K562 (cell line): ENCODE measurements at regions of chr1 and their contacts with region 1.

Region 1: DNA sequence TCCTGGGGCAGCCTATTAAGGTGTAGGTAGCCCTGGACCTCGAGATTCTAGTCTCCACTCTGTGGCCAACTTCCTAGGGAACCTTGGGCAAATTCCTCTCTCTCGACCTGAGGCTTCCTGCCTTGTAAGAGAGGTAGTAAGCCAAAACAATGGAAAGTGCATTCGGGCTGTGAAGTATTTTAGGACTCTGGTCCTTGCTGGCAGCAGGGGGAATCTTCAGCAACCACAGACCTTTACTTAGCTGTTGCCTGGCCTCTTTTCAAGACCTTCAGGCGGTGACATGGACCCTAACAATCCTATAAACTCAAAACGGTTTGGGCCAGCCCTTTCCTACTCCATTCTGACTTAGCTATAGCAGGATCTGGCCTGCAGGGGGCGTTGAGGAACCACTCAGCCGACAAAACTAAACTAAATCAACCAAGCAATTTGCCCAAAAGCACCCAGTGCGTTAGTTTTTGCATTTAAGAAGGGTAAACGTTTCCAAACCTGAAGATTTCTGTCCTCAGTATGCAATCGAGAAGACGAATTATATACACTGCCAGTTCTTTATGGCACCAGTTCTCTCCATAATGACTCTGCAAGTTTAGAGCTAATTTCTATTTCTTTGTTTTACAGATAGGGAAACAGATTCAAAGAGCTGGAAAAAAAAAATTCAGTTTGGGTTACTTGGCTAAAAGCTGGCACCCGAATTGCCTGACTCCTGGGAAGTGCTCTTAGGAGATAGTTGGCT is 10.9 kb upstream of the SESN2 start:
- DNase-seq: peak; percentile 67 to 92 (median 74)
- ATAC-seq: peak; percentile 71
- H3K4me3 ChIP-seq: peak overlapping the region; percentile 0; the same call in 1 of the 2 replicates
- H3K27ac ChIP-seq: peak overlapping the region; percentile 81
- H3K4me1 ChIP-seq: peaks cover 14 to 36% of the 10 kb centered on the region in 2 experiments
- H3K27me3 ChIP-seq: no peaks in the 10 kb centered on the region
- CTCF ChIP-seq: peak; percentile 88 to 99 (median 98)
- EP300 ChIP-seq: peak; percentile 60
- POLR2A ChIP-seq: no peak
- RAD21 ChIP-seq: peak; percentile 92

Region 2: GRCh38 chr1:28172713-28173150 is 75.7 kb before region 1 on chr1:
- CTCF ChIA-PET with region 1: no interaction called
- POLR2A ChIA-PET with region 1: no interaction called
- in situ Hi-C with region 1: no loop called
- intact Hi-C with region 1: no loop called
- DNase-seq: peak in 3 of 4 experiments; percentile 32 to 77 (median 64)
- ATAC-seq: peak; percentile 75
- H3K4me3 ChIP-seq: no peak overlapping the region; the same call in 1 of the 2 replicates
- H3K27ac ChIP-seq: peak overlapping the region; percentile 36; the same call in 2 of the 3 replicates
- H3K4me1 ChIP-seq: peaks cover 24 to 33% of the 10 kb centered on the region in 2 experiments
- H3K27me3 ChIP-seq: no peaks in the 10 kb centered on the region; a peak in 1 of 5 replicates
- CTCF ChIP-seq: no peak
- EP300 ChIP-seq: peak; percentile 92
- POLR2A ChIP-seq: no peak
- RAD21 ChIP-seq: no peak; a peak in 1 of 4 replicates

Region 3: GRCh38 chr1:28259307-28260167 is 11.1 kb after region 1 on chr1 and contains the start of gene SESN2:
- CTCF ChIA-PET with region 1: no interaction called
- POLR2A ChIA-PET with region 1: interaction called, 245 read pairs
- in situ Hi-C with region 1: no loop called
- intact Hi-C with region 1: loop called (anchors 1 kb)
- DNase-seq: peak; percentile 99 to 100 (median 100)
- ATAC-seq: peak; percentile 92
- H3K4me3 ChIP-seq: peak within 1 kb of the TSS; percentile 96
- H3K27ac ChIP-seq: peak within 1 kb of the TSS; percentile 90
- H3K4me1 ChIP-seq: peaks cover 52 to 64% of the 10 kb centered on the region in 2 experiments
- H3K27me3 ChIP-seq: no peaks in the 10 kb centered on the region
- CTCF ChIP-seq: no peak; a peak in 1 of 6 replicates
- EP300 ChIP-seq: no peak
- POLR2A ChIP-seq: peak; percentile 99
- RAD21 ChIP-seq: peak in 1 of 2 experiments; percentile 31; a peak in 1 of 4 replicates
- polyA plus RNA-seq, gene SESN2: 3.7 to 5.4 TPM

Region 4: DNA sequence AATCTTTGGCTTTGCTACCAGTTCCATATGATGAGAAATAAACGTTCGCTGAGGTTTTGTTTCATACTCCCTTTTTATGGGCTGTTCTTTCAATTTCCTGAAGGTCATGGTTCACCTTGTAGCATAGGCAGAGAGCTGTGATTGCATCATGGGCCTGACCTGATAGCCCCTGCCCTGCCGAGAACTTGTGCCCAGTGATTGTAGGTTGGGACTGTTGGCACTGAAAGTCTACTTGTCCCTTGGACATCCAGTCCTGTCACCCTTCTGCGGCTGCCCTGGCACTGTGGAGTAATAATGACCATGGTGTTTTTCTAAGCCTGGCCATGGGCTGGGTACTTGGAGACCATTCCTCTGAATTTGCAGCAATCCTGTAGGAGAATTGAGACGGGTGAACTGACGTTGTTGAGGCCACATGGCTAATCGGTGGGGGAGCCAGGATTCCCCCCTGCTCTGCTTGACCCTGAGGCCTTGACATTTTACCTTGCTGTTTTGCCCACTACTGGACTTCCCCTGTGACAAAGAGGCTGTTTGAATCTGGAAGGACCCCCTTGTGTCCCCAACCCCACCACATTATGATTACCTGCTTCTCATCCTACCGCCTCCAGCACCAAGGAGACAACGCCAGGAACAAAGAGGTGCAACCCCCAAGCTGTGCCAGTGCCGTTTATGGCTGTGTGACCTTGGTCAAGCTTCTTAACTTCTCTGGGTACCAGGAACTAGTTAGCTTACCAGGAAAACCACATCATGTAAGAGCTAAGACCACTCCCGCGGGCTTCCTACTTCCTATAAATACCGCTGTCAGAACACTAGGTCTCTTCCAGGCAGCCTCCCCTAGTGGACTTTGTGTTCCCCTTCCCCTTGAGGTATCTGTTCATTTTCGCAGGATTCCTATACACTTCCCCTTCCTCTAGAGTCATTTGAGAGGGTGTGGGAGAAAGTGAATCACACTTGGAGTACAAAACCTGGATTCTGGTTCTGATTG is 34.3 kb after region 1 on chr1:
- CTCF ChIA-PET with region 1: no interaction called
- POLR2A ChIA-PET with region 1: interaction called, 7 read pairs
- in situ Hi-C with region 1: no loop called
- intact Hi-C with region 1: loop called (anchors 1 kb)
- DNase-seq: peak in 2 of 4 experiments; percentile 9 to 16
- ATAC-seq: peak; percentile 49
- H3K4me3 ChIP-seq: no peak overlapping the region
- H3K27ac ChIP-seq: no peak overlapping the region
- H3K4me1 ChIP-seq: peaks cover 11 to 17% of the 10 kb centered on the region in 2 experiments; a peak in 4 of 5 replicates
- H3K27me3 ChIP-seq: no peaks in the 10 kb centered on the region
- CTCF ChIP-seq: peak in 2 of 3 experiments; percentile 10 to 22; a peak in 2 of 6 replicates
- EP300 ChIP-seq: no peak
- POLR2A ChIP-seq: peak; percentile 27; the same call in 1 of the 2 replicates
- RAD21 ChIP-seq: no peak

Region 5: DNA sequence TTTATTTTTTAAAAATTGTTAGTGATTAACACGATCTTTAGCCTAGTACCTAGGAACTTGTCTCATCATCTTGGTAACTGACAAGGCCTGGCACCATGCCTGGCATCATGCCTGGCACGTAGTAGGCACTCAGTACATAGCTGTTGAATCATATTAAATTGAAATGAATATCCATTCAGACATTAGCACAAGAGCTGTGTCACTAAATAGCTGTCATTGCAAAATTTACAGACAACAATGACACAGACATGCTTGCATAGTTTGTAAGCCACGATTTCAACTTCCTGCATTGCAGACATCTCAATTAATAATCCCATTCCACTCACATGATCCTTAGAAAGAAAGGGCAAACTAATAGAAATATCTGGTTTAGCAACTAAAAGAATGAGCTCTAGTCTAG is 105.7 kb after region 1 on chr1:
- CTCF ChIA-PET with region 1: interaction called, 4 read pairs
- POLR2A ChIA-PET with region 1: no interaction called
- in situ Hi-C with region 1: no loop called
- intact Hi-C with region 1: loop called (anchors 2 kb)
- DNase-seq: no peak
- ATAC-seq: no peak
- H3K4me3 ChIP-seq: no peak overlapping the region
- H3K27ac ChIP-seq: no peak overlapping the region
- H3K4me1 ChIP-seq: peaks cover 21 to 34% of the 10 kb centered on the region in 2 experiments
- H3K27me3 ChIP-seq: no peaks in the 10 kb centered on the region
- CTCF ChIP-seq: no peak
- EP300 ChIP-seq: no peak
- POLR2A ChIP-seq: no peak
- RAD21 ChIP-seq: no peak

Region 6: DNA sequence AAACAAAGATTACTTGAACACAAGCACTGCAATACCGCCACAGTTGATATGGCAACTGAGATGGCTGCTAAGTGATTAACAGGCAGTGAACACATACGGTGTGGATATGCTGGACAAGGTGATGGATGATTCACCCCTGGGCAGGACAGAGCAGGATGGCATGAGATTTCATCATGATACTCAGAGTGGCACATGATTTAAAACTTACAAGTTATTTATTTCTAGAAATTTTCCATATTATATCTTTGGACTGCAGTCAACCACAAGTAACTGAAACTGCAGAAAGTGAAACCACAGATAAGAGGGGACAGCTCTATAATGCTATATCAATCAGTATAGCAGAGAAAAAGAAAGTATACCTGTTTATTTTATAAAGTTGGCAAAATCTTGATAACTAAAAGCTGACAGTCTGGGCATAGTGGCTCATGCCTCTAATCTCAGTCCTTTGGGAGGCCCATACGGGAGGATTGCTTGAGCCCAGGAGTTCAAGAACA is 169.0 kb after region 1 on chr1:
- CTCF ChIA-PET with region 1: no interaction called
- POLR2A ChIA-PET with region 1: no interaction called
- in situ Hi-C with region 1: no loop called
- intact Hi-C with region 1: loop called (anchors 5 kb)
- DNase-seq: peak in 2 of 4 experiments; percentile 39 to 69
- ATAC-seq: peak; percentile 74
- H3K4me3 ChIP-seq: 0 out of 2 replicates have a peak overlapping the region, but pooled peaks have one; percentile 6
- H3K27ac ChIP-seq: peak overlapping the region; percentile 18
- H3K4me1 ChIP-seq: peaks cover 22 to 47% of the 10 kb centered on the region in 2 experiments
- H3K27me3 ChIP-seq: no peaks in the 10 kb centered on the region
- CTCF ChIP-seq: no peak
- EP300 ChIP-seq: peak; percentile 90
- POLR2A ChIP-seq: no peak
- RAD21 ChIP-seq: no peak

Region 7: DNA sequence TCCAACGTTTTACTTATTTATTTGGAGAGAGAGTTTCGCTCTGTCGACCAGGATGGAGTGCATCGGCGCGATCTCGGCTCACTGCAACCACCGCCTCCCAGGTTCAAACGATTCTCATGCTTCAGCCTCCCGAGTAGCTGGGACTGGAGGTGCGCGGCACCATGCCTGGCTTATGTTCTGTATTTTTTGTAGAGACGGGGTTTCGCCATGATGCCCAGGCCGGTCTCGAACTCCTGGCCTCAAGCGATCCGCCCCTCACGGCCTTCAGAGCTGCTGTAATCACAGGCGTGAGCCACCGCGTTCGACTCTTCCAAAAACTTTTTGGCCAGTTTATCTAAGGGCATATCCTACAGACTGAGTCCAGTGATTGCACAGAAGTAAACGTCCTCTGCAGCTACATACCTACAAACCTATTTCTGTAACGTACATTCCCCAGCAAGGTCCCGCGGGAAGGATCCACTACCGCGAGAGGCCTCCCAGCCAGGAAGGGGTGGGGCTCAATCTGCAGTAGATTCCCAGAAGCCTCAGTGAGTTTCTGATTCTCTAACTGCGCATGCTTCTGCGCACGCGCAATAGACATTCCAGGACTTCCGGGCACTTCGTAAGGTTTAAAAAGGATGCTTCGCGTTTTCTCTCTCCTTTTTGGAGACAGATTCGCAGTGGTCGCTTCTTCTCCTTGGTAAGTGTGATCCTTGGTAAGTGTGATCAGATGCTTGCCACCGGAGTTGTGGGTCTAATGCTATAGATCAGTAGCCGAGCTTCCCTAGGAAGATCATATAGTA is 257.1 kb after region 1 on chr1 and contains the start of gene RCC1:
- CTCF ChIA-PET with region 1: no interaction called
- POLR2A ChIA-PET with region 1: interaction called, 27 read pairs
- in situ Hi-C with region 1: no loop called
- intact Hi-C with region 1: no loop called
- DNase-seq: peak; percentile 95 to 99 (median 96)
- ATAC-seq: peak; percentile 81
- H3K4me3 ChIP-seq: peak within 1 kb of the TSS; percentile 87
- H3K27ac ChIP-seq: peak within 1 kb of the TSS; percentile 94
- H3K4me1 ChIP-seq: peaks cover 11 to 29% of the 10 kb centered on the region in 2 experiments; a peak in 4 of 5 replicates
- H3K27me3 ChIP-seq: no peaks in the 10 kb centered on the region
- CTCF ChIP-seq: no peak
- EP300 ChIP-seq: no peak; the same call in 1 of the 2 replicates
- POLR2A ChIP-seq: peak; percentile 100
- RAD21 ChIP-seq: 0 out of 4 replicates have a peak, but pooled peaks of 1 of the 2 experiments have one; percentile 10
- polyA plus RNA-seq, gene RCC1: 16.4 to 28.1 TPM

Region 8: DNA sequence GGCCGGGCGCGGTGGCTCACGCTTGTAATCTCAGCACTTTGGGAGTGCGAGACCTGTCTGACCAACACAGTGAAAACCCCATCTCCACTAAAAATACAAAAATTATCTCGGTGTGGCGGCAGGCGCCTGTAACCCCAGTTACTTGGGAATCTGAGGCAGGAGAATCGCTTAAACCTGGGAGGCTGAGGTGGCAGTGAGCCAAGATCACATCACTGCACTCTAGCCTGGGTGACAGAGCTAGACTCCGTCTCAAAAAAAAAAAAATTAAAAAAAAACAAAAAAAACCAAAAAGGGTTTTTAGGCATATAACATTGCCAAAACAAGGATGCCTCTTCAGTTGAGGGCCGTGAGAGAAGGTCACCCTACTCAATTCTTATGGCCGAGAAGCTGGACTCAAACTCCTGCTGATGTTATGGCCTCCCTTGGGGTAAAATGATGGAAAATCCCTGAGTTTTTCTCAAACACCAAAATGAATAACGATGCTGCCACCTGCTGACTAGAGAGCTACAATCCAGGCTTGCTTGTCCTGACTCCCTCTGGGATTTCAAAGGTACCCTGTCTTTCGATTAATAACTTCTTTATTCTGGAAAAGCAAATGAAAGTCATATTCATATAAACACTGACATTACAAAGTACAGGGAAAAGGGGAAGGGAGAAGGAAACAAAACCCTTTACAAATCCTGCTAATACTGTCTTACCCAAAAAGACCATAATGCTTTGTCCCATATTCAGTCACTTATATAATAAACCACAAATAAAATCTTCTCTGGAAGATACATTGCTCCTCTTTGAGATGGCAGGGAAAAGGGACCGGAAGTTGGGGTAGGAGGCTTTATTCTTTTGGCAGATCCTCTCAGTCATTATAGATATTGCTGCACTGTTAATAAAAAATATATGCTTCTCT is 354.3 kb after region 1 on chr1:
- CTCF ChIA-PET with region 1: no interaction called
- POLR2A ChIA-PET with region 1: no interaction called
- in situ Hi-C with region 1: no loop called
- intact Hi-C with region 1: loop called (anchors 2 kb)
- DNase-seq: peak; percentile 67 to 86 (median 73)
- ATAC-seq: peak; percentile 91
- H3K4me3 ChIP-seq: no peak overlapping the region
- H3K27ac ChIP-seq: no peak overlapping the region
- H3K4me1 ChIP-seq: no peaks in the 10 kb centered on the region
- H3K27me3 ChIP-seq: no peaks in the 10 kb centered on the region
- CTCF ChIP-seq: peak; percentile 82 to 94 (median 86)
- EP300 ChIP-seq: no peak
- POLR2A ChIP-seq: no peak
- RAD21 ChIP-seq: peak; percentile 92 to 97